ENCODE measurements at regions of chr1 and their contacts with region 1.

Region 1: GRCh38 chr1:172380441-172381244 is 39.8 kb upstream of the C1orf105 start:
- DNase-seq: no peak
- ATAC-seq: no peak
- H3K4me3 ChIP-seq: no peak overlapping the region
- H3K27ac ChIP-seq: no peak overlapping the region
- H3K4me1 ChIP-seq: peaks cover 9% of the 10 kb centered on the region
- H3K27me3 ChIP-seq: no peaks in the 10 kb centered on the region
- CTCF ChIP-seq: no peak
- POLR2A ChIP-seq: no peak
- RAD21 ChIP-seq: no peak

Region 2: DNA sequence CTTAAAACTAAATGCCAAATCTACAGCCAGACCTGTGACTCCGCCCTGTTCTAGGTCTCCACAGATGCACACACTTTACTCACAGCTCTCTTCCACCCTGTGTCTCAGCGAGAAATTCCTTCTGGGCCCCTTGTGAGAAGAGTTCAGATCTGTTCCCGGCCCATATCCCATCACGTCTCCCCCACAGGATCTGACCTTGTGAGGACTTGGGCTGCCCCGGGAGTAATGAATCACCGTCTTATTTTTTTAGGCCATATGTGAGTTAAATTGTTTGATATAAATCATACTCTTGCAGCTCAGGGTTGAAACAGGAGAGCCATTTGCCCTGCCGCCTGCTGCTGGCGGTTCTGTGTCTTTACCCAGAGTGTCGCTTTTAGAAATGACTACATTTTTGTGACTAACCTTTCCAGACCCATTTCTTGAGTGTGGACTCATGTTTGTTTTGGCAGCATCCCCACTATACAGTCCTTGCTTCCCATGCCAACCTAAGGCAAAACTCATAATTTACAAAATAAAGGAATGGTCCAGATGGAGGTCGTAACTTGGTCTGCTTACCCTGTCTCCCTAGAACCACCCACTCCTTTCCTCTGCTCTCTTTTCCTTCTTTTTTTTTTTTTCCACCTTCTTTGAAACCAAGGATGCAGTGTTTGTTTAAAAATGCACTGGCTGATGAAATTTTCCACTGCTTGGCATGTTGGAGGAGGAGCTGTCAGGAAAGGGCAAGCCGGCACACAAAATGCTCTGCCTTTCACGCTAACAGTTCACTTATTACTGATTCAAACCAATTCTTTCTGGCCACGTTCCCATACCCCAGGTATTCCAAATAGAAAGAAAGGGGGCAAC is 58.2 kb before region 1 on chr1:
- CTCF ChIA-PET with region 1: no interaction called
- POLR2A ChIA-PET with region 1: no interaction called
- dilution Hi-C with region 1: no loop called
- in situ Hi-C with region 1: no loop called
- intact Hi-C with region 1: no loop called
- DNase-seq: peak; percentile 88
- ATAC-seq: peak; percentile 79
- H3K4me3 ChIP-seq: no peak overlapping the region
- H3K27ac ChIP-seq: peak overlapping the region; percentile 75
- H3K4me1 ChIP-seq: peaks cover 21% of the 10 kb centered on the region
- H3K27me3 ChIP-seq: no peaks in the 10 kb centered on the region
- CTCF ChIP-seq: no peak
- POLR2A ChIP-seq: no peak
- RAD21 ChIP-seq: no peak; the same call in 1 of the 2 replicates

Region 3: GRCh38 chr1:172357753-172358385 is 22.8 kb before region 1 on chr1:
- CTCF ChIA-PET with region 1: no interaction called
- POLR2A ChIA-PET with region 1: no interaction called
- dilution Hi-C with region 1: no loop called
- in situ Hi-C with region 1: no loop called
- intact Hi-C with region 1: loop called (anchors 2 kb)
- DNase-seq: no peak
- ATAC-seq: no peak
- H3K4me3 ChIP-seq: no peak overlapping the region
- H3K27ac ChIP-seq: peak overlapping the region; percentile 57
- H3K4me1 ChIP-seq: peaks cover 10% of the 10 kb centered on the region
- H3K27me3 ChIP-seq: no peaks in the 10 kb centered on the region
- CTCF ChIP-seq: no peak
- POLR2A ChIP-seq: no peak
- RAD21 ChIP-seq: no peak

Region 4: GRCh38 chr1:172429331-172430127 is 48.9 kb after region 1 on chr1:
- CTCF ChIA-PET with region 1: no interaction called
- POLR2A ChIA-PET with region 1: no interaction called
- dilution Hi-C with region 1: no loop called
- in situ Hi-C with region 1: no loop called
- intact Hi-C with region 1: no loop called
- DNase-seq: peak; percentile 70
- ATAC-seq: peak; percentile 80
- H3K4me3 ChIP-seq: no peak overlapping the region
- H3K27ac ChIP-seq: no peak overlapping the region
- H3K4me1 ChIP-seq: no peaks in the 10 kb centered on the region
- H3K27me3 ChIP-seq: no peaks in the 10 kb centered on the region
- CTCF ChIP-seq: peak; percentile 84
- POLR2A ChIP-seq: no peak
- RAD21 ChIP-seq: peak; percentile 77

Measured in IMR-90 (cell line).